ENCODE measurements at regions of chr1 and their contacts with region 1.

Region 1: DNA sequence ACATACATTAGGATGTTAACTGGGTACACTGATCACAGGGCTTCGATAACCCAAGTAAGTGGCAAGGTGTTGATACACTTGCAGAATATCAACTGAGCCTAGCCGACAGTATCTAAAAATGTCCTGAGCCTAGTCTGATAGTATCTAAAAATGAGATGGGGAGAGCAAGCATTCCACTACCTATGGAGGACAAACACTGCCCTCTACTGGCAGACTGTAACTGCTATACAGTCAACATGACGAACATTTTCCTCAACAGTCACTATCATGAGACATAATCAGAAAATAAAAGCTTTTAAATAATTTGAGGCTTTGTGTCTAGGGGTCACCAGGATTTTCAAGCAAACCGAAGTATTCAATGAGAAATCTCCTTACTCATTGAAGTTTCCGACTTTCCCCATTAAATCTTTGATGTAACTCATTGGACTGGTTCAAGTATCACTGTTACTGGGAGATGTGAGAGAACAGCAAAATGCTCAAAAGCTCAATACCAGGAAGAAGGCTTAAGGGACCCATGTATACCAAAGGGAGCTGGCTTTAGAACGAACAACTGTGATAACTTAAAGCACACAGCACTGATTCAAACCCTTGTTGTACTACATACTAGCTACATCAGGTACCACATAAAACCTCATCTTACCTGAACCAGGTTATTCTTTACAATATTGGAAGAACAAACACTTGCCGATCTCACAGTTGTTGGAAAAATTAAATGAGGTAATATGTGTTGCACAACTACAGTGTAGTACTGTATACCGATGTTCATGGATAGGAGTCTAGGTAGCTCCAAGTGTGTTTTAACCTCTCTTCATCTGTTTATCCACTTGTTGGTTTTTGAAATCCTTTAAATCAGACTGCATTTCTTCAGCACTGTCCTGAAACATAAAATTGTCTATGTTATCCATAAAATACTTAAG is 31.1 kb upstream of the SLC45A3 start:
- DNase-seq: peak; percentile 77
- H3K4me3 Mint-ChIP-seq: no peak overlapping the region
- H3K27ac Mint-ChIP-seq: peak overlapping the region; percentile 60
- H3K4me1 Mint-ChIP-seq: peaks cover 22% of the 10 kb centered on the region
- H3K27me3 Mint-ChIP-seq: no peaks in the 10 kb centered on the region
- CTCF ChIP-seq: peak; percentile 76

Region 2: DNA sequence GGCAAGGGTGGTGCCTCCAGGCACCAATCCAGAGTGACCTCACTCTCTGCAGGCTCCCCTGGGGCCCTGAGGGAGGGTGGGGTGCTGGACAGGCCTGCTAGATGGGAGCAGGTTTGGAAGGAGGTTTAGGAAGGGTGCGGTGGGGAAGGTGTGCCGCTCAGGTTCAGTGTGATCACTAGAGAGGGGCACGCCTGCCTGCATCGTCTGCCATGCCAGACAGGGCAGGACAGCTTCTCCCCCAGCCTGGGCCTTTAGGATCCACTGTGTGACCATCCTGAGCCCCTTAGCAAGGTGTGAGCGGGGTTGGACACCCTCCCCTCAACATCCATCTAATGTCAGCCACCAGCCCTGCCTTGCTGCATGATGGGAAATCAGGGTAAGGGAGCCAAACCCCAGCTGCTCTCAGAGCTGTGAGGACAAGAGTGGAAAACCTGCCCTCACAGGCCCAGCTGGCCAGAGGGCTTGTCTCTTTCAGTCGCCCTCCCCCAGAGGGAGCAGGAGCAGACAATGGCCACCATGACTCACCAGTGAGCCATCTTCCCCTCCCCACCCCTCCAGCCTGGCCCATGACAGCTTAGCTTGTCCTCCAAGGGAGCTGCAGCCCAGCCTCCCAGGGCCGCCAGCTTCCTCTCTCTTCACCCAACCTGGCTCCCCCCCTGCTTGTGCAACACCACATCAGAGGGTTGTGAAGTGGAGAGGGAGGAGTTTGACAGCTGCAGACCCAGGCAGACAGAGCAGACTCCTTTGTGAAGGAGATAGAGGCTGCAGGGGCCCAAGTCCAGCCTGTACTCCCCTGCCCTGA is 426.8 kb before region 1 on chr1:
- CTCF ChIA-PET with region 1: no interaction called
- intact Hi-C with region 1: no loop called
- DNase-seq: peak; percentile 89
- H3K4me3 Mint-ChIP-seq: no peak overlapping the region
- H3K27ac Mint-ChIP-seq: no peak overlapping the region
- H3K4me1 Mint-ChIP-seq: peaks cover 19% of the 10 kb centered on the region
- H3K27me3 Mint-ChIP-seq: no peaks in the 10 kb centered on the region
- CTCF ChIP-seq: no peak

Region 3: DNA sequence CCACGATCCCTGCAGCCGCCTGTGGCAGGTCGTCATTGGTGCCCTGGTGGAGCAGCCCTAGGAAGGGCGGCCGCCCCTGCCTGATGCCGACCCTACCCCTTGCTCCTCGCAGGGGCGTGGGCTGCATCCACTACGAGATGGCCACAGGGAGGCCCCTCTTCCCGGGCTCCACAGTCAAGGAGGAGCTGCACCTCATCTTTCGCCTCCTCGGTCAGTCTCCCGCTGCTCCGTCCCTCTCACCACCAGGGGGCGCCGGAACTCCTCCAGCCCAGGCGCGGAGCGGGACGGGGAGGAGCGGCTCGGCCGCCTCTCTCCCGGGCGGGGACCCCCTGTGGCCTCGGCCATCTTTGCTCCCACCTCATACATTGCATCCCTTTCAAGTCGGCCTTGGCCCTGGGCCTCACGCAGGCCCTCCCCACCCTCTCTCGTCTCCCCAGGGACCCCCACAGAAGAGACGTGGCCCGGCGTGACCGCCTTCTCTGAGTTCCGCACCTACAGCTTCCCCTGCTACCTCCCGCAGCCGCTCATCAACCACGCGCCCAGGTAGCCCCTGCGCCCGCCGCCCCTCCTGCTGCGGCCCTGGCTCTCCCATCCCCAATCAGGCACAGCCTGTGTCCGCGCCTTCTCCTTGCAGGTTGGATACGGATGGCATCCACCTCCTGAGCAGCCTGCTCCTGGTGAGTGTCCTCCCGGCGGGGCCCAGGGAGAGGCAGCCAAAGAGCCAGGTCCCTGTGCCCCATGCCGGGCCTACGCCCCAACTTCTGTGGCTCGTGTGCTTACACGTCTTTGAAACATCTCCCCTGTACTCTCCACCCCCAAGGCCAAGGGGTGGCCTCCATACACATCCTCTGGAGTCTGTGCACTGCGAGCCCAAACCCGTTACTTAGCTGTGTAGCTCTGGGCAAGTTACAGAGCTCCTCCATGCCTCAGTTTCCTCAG is 182.2 kb before region 1 on chr1:
- CTCF ChIA-PET with region 1: no interaction called
- intact Hi-C with region 1: loop called (anchors 1 kb)
- DNase-seq: peak; percentile 95
- H3K4me3 Mint-ChIP-seq: peak overlapping the region; percentile 23
- H3K27ac Mint-ChIP-seq: peak overlapping the region; percentile 17
- H3K4me1 Mint-ChIP-seq: no peaks in the 10 kb centered on the region
- H3K27me3 Mint-ChIP-seq: no peaks in the 10 kb centered on the region
- CTCF ChIP-seq: peak; percentile 98